Sigmoid colon (tissue), 7 donors: ENCODE measurements at regions of chr11 and their contacts with region 1.

Region 1: DNA sequence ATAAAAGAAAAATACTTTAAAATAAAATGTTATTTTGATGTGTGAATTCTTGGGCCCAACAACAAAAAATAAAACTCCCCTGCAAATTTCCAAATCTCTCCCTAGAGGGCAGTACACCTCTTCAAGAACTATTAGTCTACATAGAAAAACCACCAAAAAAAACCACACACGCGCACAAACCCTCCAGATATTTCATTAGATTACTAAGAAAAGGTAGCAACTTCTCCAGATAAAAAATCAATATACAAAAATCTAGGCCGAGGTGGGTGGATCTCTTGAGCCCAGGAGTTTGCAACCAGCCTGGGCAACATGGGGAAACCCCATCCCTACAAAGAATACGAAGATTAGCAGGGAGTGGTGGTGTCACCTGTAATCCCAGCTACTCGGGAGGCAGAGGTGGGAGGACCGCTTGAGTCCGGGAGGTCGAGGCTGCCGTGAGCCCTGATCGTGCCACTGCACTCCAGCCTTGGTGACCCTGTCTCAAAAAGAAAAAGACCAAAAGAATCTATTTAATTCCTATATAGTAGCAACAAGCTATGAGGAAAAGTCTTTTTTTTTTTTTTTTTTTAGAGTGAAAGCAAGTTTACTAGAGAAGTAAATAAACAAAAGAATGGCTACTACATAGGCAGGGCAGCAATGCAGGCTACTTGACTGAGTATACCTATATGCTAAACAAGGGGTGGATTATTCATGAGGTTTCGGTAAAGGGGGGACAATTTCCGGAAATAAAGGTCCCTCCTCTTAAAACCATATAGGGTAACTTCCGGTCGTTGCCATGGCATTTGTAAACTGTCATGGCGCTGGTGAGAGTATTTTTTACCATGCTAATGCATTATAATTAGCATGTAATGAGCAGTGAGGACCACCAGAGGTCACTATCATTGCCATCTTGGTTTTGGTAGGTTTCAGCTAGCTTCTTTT is 13.1 kb downstream of the B3GNT6 start:
- DNase-seq: peak; percentile 89
- H3K4me3 ChIP-seq: peak overlapping the region; percentile 8 to 44 (median 32)
- H3K27ac ChIP-seq: peak overlapping the region; percentile 10 to 61 (median 50)
- H3K4me1 ChIP-seq: peaks cover 0 to 11% (median 6%) of the 10 kb centered on the region in 4 donors
- H3K27me3 ChIP-seq: peaks cover 0 to 24% (median 17%) of the 10 kb centered on the region in 3 donors
- CTCF ChIP-seq: peak in 3 of 4 experiments; percentile 59 to 67 (median 62)
- EP300 ChIP-seq: no peak
- POLR2A ChIP-seq: no peak

Region 2: GRCh38 chr11:77073328-77074001 is 26.2 kb after region 1 on chr11:
- intact Hi-C with region 1: loop called (anchors 1 kb)
- DNase-seq: peak; percentile 98
- H3K4me3 ChIP-seq: no peak overlapping the region
- H3K27ac ChIP-seq: peak overlapping the region; percentile 77 to 92 (median 86)
- H3K4me1 ChIP-seq: peaks cover 2 to 44% (median 35%) of the 10 kb centered on the region in 4 donors
- H3K27me3 ChIP-seq: no peaks in the 10 kb centered on the region
- CTCF ChIP-seq: peak; percentile 26 to 63 (median 58)
- EP300 ChIP-seq: no peak
- POLR2A ChIP-seq: peak in 1 of 2 donors; percentile 45

Region 3: GRCh38 chr11:77091146-77091940 is 44.1 kb after region 1 on chr11:
- intact Hi-C with region 1: loop called (anchors 1 kb)
- DNase-seq: peak; percentile 91
- H3K4me3 ChIP-seq: no peak overlapping the region
- H3K27ac ChIP-seq: no peak overlapping the region
- H3K4me1 ChIP-seq: peaks cover 0 to 5% (median 0%) of the 10 kb centered on the region in 4 donors
- H3K27me3 ChIP-seq: no peaks in the 10 kb centered on the region
- CTCF ChIP-seq: peak; percentile 90 to 97 (median 94)
- EP300 ChIP-seq: no peak
- POLR2A ChIP-seq: no peak

Region 4: GRCh38 chr11:77187776-77188632 is 140.7 kb after region 1 on chr11:
- intact Hi-C with region 1: loop called (anchors 2 kb)
- DNase-seq: peak; percentile 83
- H3K4me3 ChIP-seq: no peak overlapping the region
- H3K27ac ChIP-seq: no peak overlapping the region
- H3K4me1 ChIP-seq: no peaks in the 10 kb centered on the region
- H3K27me3 ChIP-seq: peaks cover 0 to 9% (median 0%) of the 10 kb centered on the region in 3 donors
- CTCF ChIP-seq: peak; percentile 48 to 85 (median 68)
- EP300 ChIP-seq: no peak
- POLR2A ChIP-seq: no peak

Region 5: GRCh38 chr11:77361184-77361583 is 313.9 kb after region 1 on chr11:
- intact Hi-C with region 1: no loop called
- DNase-seq: no peak
- H3K4me3 ChIP-seq: no peak overlapping the region
- H3K27ac ChIP-seq: no peak overlapping the region
- H3K4me1 ChIP-seq: no peaks in the 10 kb centered on the region
- H3K27me3 ChIP-seq: no peaks in the 10 kb centered on the region
- CTCF ChIP-seq: no peak
- EP300 ChIP-seq: no peak
- POLR2A ChIP-seq: no peak

Region 6: GRCh38 chr11:77547863-77548551 is 500.7 kb after region 1 on chr11:
- intact Hi-C with region 1: loop called (anchors 5 kb)
- DNase-seq: no peak
- H3K4me3 ChIP-seq: no peak overlapping the region
- H3K27ac ChIP-seq: no peak overlapping the region
- H3K4me1 ChIP-seq: peaks cover 0 to 9% (median 0%) of the 10 kb centered on the region in 4 donors
- H3K27me3 ChIP-seq: no peaks in the 10 kb centered on the region
- CTCF ChIP-seq: peak in 3 of 4 experiments; percentile 48 to 65 (median 62)
- EP300 ChIP-seq: no peak
- POLR2A ChIP-seq: no peak